Heart left ventricle (tissue), 16 donors: ENCODE measurements at regions of chr22 and their contacts with region 1.

Region 1: GRCh38 chr22:27919222-27919941 is at the start of gene PITPNB:
- DNase-seq: peak; percentile 97 to 100 (median 98)
- ATAC-seq: peak; percentile 92 to 97 (median 96)
- H3K4me3 ChIP-seq: peak within 1 kb of the TSS; percentile 73 to 99 (median 90)
- H3K27ac ChIP-seq: peak within 1 kb of the TSS; percentile 93 to 100 (median 97)
- H3K4me1 ChIP-seq: peaks cover 4 to 57% (median 49%) of the 10 kb centered on the region in 12 donors
- H3K27me3 ChIP-seq: peaks cover 0 to 3% (median 0%) of the 10 kb centered on the region in 9 donors
- CTCF ChIP-seq: no peak
- POLR2A ChIP-seq: peak; percentile 9 to 86
- total RNA-seq, gene PITPNB: 20.8 to 84.7 (median 63.1) TPM

Region 2: GRCh38 chr22:27692243-27692642 is 227.1 kb before region 1 on chr22:
- intact Hi-C with region 1: no loop called
- DNase-seq: no peak
- ATAC-seq: no peak
- H3K4me3 ChIP-seq: no peak overlapping the region
- H3K27ac ChIP-seq: no peak overlapping the region
- H3K4me1 ChIP-seq: peaks cover 0 to 3% (median under 1%) of the 10 kb centered on the region in 12 donors
- H3K27me3 ChIP-seq: no peaks in the 10 kb centered on the region
- CTCF ChIP-seq: no peak
- POLR2A ChIP-seq: no peak

Region 3: DNA sequence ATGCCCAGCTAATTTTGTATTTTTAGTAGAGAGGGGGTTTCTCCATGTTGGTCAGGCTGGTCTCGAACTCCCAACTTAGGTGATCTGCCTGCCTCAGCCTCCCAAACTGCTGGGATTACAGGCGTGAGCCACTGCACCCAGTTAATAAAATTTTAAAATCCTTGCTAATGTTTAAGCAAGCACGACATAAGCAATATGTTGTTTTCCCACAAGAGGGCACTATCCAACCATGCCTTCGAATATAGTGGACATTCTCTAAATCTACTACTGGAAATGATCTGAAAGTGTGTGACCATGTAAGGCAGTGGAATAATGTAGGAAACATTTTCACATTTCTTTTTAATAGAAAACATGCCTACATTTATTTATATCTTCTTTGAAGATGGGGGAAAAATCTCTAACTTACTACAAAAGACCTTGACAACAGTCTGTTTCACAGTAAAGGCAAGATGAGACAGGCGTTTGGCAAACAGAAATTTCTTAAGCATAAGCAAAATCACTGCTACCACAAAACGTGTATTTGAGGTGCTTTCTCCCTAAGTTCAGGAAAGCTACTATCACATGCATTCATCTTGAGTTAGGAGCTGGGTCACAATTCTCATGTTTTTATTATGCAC is 38.5 kb before region 1 on chr22:
- intact Hi-C with region 1: loop called in 6 of 10 experiments (anchors 2 to 5 kb)
- DNase-seq: peak in 1 of 5 donors; percentile 39
- ATAC-seq: peak; percentile 72 to 79 (median 76)
- H3K4me3 ChIP-seq: no peak overlapping the region
- H3K27ac ChIP-seq: peak overlapping the region in 6 of 12 donors; percentile 12 to 81 (median 36)
- H3K4me1 ChIP-seq: peaks cover 9 to 72% (median 50%) of the 10 kb centered on the region in 12 donors
- H3K27me3 ChIP-seq: no peaks in the 10 kb centered on the region
- CTCF ChIP-seq: peak; percentile 71 to 90 (median 84)
- POLR2A ChIP-seq: no peak

Region 4: GRCh38 chr22:27885977-27886842 is 33.2 kb before region 1 on chr22:
- intact Hi-C with region 1: loop called in 7 of 10 experiments (anchors 2 to 5 kb)
- DNase-seq: peak in 1 of 5 donors; percentile 40
- ATAC-seq: peak in 3 of 4 donors; percentile 23 to 68 (median 41)
- H3K4me3 ChIP-seq: no peak overlapping the region
- H3K27ac ChIP-seq: peak overlapping the region in 11 of 12 donors; percentile 14 to 70 (median 41)
- H3K4me1 ChIP-seq: peaks cover 7 to 57% (median 28%) of the 10 kb centered on the region in 12 donors
- H3K27me3 ChIP-seq: no peaks in the 10 kb centered on the region
- CTCF ChIP-seq: peak; percentile 82 to 92 (median 88)
- POLR2A ChIP-seq: no peak

Region 5: DNA sequence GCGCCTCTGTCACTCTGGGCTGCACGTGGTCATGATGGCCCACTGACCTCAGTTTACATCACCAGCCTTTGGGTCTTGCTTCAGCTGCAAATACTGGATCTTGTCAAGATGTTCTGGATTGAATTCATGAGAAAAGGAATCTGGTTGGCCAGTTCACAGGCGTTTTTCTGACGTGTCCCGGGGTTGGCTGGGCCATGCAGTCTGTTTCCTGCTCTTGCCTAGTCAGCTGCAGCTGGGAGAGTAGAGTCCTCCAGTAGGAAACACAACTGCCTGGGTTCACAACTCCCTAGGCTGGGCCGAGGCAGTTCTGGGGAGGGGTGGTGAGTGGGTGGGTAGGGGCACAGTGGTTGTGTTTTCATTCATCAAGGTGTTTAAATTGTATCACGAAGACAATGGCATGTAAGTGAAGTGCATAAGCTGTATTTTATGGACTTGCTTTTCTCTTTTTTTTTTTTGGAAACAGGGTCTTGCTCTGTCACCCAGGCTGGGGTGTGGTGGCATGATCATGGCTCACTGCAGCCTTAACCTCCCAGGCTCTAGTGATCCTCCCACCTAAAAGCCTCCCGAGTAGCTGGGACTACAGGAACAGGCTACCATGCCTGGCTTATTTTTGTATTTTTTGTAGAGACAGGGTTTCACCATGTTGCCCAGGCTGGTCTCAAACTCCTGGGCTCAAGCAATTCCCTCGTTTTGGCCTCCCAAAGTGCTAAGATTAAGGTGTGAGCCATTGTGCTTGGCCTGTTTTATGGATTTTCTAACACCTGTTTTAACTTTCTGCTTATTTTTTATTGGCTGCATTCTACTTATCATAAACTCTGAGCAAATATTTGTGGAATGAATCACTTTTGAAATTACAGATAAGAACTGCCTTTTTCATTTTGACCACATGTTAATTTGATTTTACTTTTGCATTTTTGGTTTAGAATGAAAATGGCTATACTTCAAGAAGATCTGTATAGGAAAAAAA is 53.6 kb after region 1 on chr22:
- intact Hi-C with region 1: loop called in 1 of 10 experiments (anchors 10 kb)
- DNase-seq: no peak
- ATAC-seq: peak in 3 of 4 donors; percentile 22 to 44 (median 39)
- H3K4me3 ChIP-seq: no peak overlapping the region
- H3K27ac ChIP-seq: no peak overlapping the region
- H3K4me1 ChIP-seq: peaks cover 0 to 4% (median 0%) of the 10 kb centered on the region in 12 donors
- H3K27me3 ChIP-seq: no peaks in the 10 kb centered on the region
- CTCF ChIP-seq: no peak
- POLR2A ChIP-seq: no peak

Region 6: GRCh38 chr22:27990879-27991278 is 71.5 kb after region 1 on chr22:
- intact Hi-C with region 1: loop called in 3 of 10 experiments (anchors 1 to 10 kb)
- DNase-seq: peak; percentile 64 to 85 (median 70)
- ATAC-seq: peak; percentile 52 to 85 (median 79)
- H3K4me3 ChIP-seq: peak overlapping the region in 7 of 12 donors; percentile 0 to 17 (median 6)
- H3K27ac ChIP-seq: peak overlapping the region in 10 of 12 donors; percentile 39 to 71 (median 63)
- H3K4me1 ChIP-seq: peaks cover 2 to 22% (median 14%) of the 10 kb centered on the region in 12 donors
- H3K27me3 ChIP-seq: no peaks in the 10 kb centered on the region
- CTCF ChIP-seq: peak; percentile 35 to 75 (median 54)
- POLR2A ChIP-seq: no peak